Activated B cell treated with CpG ODN at 0.5 μM for 24 hours (primary cell): ENCODE measurements at regions of chr22 and their contacts with region 1.

Region 1: DNA sequence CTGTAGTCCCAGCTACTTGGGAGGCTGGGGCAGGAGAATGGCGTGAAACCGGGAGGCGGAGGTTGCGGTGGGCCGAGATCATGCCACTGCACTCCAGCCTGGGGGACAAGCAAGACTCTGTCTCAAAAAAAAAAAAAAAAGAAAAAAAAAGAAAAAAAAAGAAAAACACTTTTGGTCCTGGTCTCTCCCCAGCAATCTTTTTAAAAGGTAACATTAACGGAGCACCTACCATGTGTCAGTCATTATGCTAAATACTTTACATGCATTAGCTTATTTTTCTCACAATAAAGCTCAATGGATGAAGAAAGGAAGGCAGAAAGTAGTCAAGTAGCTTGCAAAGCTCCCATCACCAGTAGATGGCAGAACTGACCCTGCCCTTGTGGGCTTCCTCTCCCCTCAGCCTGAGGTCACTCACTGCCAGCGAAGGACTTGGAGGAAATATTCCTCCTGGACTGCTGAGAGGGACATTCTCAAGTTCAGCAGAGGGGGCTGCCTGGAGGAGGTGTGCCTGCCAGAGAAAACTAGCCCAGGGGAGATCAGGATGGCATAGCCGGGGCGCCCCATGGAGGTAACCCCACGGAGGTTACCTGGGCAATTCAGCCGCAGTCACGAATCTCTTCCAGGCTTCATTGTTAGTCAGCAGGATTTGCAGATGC is 15.5 kb downstream of the APOL3 start:
- DNase-seq: no peak
- ATAC-seq: peak; percentile 64
- H3K4me3 Mint-ChIP-seq: no peak overlapping the region
- H3K27ac Mint-ChIP-seq: no peak overlapping the region
- H3K4me1 Mint-ChIP-seq: no peaks in the 10 kb centered on the region
- H3K27me3 Mint-ChIP-seq: no peaks in the 10 kb centered on the region
- CTCF ChIP-seq: no peak

Region 2: GRCh38 chr22:36134182-36134581 is 10.8 kb before region 1 on chr22:
- CTCF ChIA-PET with region 1: no interaction called
- POLR2A ChIA-PET with region 1: no interaction called
- intact Hi-C with region 1: no loop called
- DNase-seq: no peak
- ATAC-seq: no peak
- H3K4me3 Mint-ChIP-seq: no peak overlapping the region
- H3K27ac Mint-ChIP-seq: no peak overlapping the region
- H3K4me1 Mint-ChIP-seq: no peaks in the 10 kb centered on the region
- H3K27me3 Mint-ChIP-seq: peaks cover 6% of the 10 kb centered on the region
- CTCF ChIP-seq: no peak

Region 3: GRCh38 chr22:36180038-36180880 is 35.2 kb after region 1 on chr22:
- CTCF ChIA-PET with region 1: interaction called, 70 read pairs
- POLR2A ChIA-PET with region 1: no interaction called
- intact Hi-C with region 1: loop called (anchors 1 kb)
- DNase-seq: peak; percentile 78
- ATAC-seq: peak; percentile 100
- H3K4me3 Mint-ChIP-seq: no peak overlapping the region
- H3K27ac Mint-ChIP-seq: no peak overlapping the region
- H3K4me1 Mint-ChIP-seq: peaks cover 3% of the 10 kb centered on the region
- H3K27me3 Mint-ChIP-seq: no peaks in the 10 kb centered on the region
- CTCF ChIP-seq: no peak

Region 4: DNA sequence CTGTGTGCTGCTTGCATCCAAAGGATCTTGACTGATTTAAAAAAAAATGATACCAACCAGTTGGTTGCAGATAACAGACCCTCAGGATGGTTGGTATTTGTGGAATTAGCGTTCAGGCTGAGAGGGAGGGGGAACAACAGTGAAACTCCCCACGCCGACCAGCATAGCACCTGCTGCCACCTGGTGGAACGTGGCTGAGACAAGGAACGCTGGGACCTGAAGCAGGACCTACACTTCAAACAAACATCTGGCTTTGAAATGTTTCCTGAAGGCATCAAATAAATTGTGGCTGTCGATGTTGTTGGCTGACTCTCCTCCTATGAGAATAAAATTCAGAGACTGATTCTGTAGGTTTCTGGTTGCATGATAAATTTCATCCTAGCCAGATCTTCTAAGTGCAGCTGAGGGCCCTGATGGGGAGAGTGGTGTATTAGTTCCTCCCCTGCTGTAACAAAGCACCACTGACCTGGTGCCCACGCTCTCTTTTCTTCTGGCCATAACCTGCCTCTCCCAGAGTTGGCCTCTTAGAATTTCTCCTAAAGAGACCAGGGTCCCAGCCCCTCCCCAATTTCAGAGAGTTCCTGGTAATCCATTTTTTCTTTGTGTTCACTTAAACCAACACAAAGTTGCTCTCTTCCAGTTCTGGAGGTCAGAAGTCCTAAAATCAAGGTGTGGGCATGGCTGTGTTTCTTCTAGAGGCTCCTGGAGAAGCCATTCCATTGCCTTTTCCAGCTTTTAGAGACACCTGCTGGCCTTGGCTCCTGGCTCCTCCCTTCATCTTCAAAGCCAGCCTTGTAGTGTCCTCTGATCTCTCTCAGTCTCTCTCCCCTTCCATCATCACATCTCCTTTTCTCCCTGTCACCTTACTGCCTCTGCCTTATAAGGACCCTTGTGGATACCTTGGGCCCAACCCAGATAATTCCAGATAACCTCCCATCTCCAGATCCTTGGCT is 77.1 kb after region 1 on chr22:
- CTCF ChIA-PET with region 1: interaction called, 3 read pairs
- POLR2A ChIA-PET with region 1: no interaction called
- intact Hi-C with region 1: loop called (anchors 1 kb)
- DNase-seq: no peak
- ATAC-seq: peak; percentile 57
- H3K4me3 Mint-ChIP-seq: peak overlapping the region; percentile 53
- H3K27ac Mint-ChIP-seq: no peak overlapping the region
- H3K4me1 Mint-ChIP-seq: peaks cover 3% of the 10 kb centered on the region
- H3K27me3 Mint-ChIP-seq: peaks cover 5% of the 10 kb centered on the region
- CTCF ChIP-seq: no peak

Region 5: DNA sequence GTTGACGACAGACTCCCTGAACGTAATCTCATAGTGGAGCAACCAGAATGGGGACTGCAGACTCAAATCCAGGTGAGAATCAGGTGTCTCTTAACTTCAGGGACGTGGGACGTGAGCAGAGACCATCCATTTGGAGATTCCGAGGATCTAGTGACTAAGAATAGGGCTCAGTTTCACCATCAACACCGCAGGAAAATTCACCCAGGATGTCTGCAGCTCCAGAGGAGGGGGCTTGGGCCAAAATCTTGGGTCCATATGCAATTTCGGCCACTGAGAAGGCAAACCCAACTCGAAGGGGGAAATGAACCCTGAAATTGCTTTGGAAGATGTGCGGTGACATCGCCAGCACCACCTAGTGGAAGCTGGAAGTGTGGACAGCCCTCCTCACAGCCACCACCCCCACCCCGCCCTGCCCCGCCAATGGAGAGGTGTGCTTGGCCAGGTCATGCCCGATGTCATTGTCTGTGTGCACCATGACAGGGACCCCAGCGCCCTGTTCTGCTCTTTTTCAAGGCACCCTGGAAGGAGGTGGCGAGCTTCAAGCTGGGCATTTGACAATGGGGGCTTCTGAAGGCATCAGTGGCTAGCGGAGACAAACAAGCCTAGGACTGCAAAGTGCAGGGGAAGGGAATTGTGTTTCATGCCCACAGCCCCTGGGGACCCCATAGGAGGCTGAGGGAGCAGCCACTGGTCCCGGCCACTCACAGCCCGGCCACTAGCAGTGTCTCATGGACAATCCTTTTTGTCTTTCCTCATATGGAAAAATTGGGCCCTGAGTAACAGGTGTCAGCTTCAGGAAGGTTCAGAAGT is 132.7 kb after region 1 on chr22:
- CTCF ChIA-PET with region 1: interaction called, 3 read pairs
- POLR2A ChIA-PET with region 1: no interaction called
- intact Hi-C with region 1: loop called (anchors 1 kb)
- DNase-seq: peak; percentile 43
- ATAC-seq: peak; percentile 86
- H3K4me3 Mint-ChIP-seq: no peak overlapping the region
- H3K27ac Mint-ChIP-seq: peak overlapping the region; percentile 46
- H3K4me1 Mint-ChIP-seq: peaks cover 17% of the 10 kb centered on the region
- H3K27me3 Mint-ChIP-seq: no peaks in the 10 kb centered on the region
- CTCF ChIP-seq: no peak

Region 6: GRCh38 chr22:36486619-36487384 is 341.8 kb after region 1 on chr22:
- CTCF ChIA-PET with region 1: interaction called, 11 read pairs
- POLR2A ChIA-PET with region 1: no interaction called
- intact Hi-C with region 1: loop called (anchors 1 kb)
- DNase-seq: no peak
- ATAC-seq: no peak
- H3K4me3 Mint-ChIP-seq: no peak overlapping the region
- H3K27ac Mint-ChIP-seq: no peak overlapping the region
- H3K4me1 Mint-ChIP-seq: peaks cover 12% of the 10 kb centered on the region
- H3K27me3 Mint-ChIP-seq: no peaks in the 10 kb centered on the region
- CTCF ChIP-seq: peak; percentile 19